ENCODE measurements at regions of chr15 and their contacts with region 1.

Region 1: GRCh38 chr15:73633111-73633990 is at the start of gene NPTN:
- DNase-seq: peak; percentile 92
- ATAC-seq: peak; percentile 91
- H3K4me3 ChIP-seq: peak within 1 kb of the TSS; percentile 74 to 97 (median 93)
- H3K27ac ChIP-seq: peak within 1 kb of the TSS; percentile 91
- H3K4me1 ChIP-seq: peaks cover 72% of the 10 kb centered on the region
- H3K27me3 ChIP-seq: no peaks in the 10 kb centered on the region; a peak in 1 of 5 replicates
- CTCF ChIP-seq: peak; percentile 40; the same call in 1 of the 2 replicates
- EP300 ChIP-seq: no peak
- POLR2A ChIP-seq: peak; percentile 88 to 98
- RAD21 ChIP-seq: no peak
- total RNA-seq, gene NPTN: 57.7 and 110 TPM in 2 replicates

Region 2: GRCh38 chr15:73305331-73306211 is 327.8 kb before region 1 on chr15:
- CTCF ChIA-PET with region 1: interaction called, 15 read pairs
- POLR2A ChIA-PET with region 1: no interaction called
- in situ Hi-C with region 1: no loop called
- intact Hi-C with region 1: no loop called
- DNase-seq: peak; percentile 57
- ATAC-seq: peak; percentile 92
- H3K4me3 ChIP-seq: no peak overlapping the region
- H3K27ac ChIP-seq: no peak overlapping the region
- H3K4me1 ChIP-seq: no peaks in the 10 kb centered on the region
- H3K27me3 ChIP-seq: no peaks in the 10 kb centered on the region
- CTCF ChIP-seq: peak; percentile 81
- EP300 ChIP-seq: no peak
- POLR2A ChIP-seq: no peak
- RAD21 ChIP-seq: peak; percentile 62; the same call in 1 of the 2 replicates

Region 3: GRCh38 chr15:73426323-73426994 is 206.9 kb before region 1 on chr15:
- CTCF ChIA-PET with region 1: no interaction called
- POLR2A ChIA-PET with region 1: no interaction called
- in situ Hi-C with region 1: no loop called
- intact Hi-C with region 1: no loop called
- DNase-seq: no peak
- ATAC-seq: no peak
- H3K4me3 ChIP-seq: no peak overlapping the region
- H3K27ac ChIP-seq: no peak overlapping the region
- H3K4me1 ChIP-seq: no peaks in the 10 kb centered on the region
- H3K27me3 ChIP-seq: no peaks in the 10 kb centered on the region; a peak in 1 of 5 replicates
- CTCF ChIP-seq: no peak
- EP300 ChIP-seq: no peak
- POLR2A ChIP-seq: no peak
- RAD21 ChIP-seq: no peak

Region 4: DNA sequence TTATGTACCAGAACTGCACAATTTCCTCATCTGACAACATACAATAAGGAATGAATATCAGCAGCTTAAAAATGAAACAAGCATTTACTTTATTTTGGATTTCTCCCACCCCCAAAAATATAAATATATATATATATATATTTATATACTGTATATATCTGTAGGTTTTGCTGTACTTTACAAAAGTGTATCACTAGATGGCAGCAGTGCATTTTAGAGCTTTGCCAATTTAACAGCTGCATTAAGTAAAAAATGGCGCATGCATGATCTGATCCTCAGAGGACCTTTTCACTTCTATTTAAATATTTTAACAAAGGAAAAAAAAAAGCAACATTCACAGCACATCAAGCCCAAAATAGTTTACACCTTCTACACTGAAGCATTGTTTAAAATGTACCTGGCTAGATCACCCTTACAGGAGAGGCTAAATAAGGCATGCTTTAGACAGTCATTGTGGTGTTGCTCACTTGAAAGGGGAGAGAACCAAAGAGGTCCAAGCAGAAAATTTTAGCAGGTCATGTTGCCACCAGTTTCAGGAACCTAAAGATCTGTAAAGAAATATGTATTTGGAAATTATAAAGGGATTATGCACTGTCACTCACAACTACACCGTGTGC is 72.7 kb before region 1 on chr15:
- CTCF ChIA-PET with region 1: interaction called, 25 read pairs
- POLR2A ChIA-PET with region 1: interaction called, 8 read pairs
- in situ Hi-C with region 1: loop called (anchors 5 kb)
- intact Hi-C with region 1: loop called (anchors 1 kb)
- DNase-seq: peak; percentile 61
- ATAC-seq: peak; percentile 44; the same call in 2 of the 3 replicates
- H3K4me3 ChIP-seq: no peak overlapping the region
- H3K27ac ChIP-seq: no peak overlapping the region
- H3K4me1 ChIP-seq: no peaks in the 10 kb centered on the region
- H3K27me3 ChIP-seq: no peaks in the 10 kb centered on the region
- CTCF ChIP-seq: peak; percentile 43
- EP300 ChIP-seq: no peak
- POLR2A ChIP-seq: no peak
- RAD21 ChIP-seq: no peak

Region 5: DNA sequence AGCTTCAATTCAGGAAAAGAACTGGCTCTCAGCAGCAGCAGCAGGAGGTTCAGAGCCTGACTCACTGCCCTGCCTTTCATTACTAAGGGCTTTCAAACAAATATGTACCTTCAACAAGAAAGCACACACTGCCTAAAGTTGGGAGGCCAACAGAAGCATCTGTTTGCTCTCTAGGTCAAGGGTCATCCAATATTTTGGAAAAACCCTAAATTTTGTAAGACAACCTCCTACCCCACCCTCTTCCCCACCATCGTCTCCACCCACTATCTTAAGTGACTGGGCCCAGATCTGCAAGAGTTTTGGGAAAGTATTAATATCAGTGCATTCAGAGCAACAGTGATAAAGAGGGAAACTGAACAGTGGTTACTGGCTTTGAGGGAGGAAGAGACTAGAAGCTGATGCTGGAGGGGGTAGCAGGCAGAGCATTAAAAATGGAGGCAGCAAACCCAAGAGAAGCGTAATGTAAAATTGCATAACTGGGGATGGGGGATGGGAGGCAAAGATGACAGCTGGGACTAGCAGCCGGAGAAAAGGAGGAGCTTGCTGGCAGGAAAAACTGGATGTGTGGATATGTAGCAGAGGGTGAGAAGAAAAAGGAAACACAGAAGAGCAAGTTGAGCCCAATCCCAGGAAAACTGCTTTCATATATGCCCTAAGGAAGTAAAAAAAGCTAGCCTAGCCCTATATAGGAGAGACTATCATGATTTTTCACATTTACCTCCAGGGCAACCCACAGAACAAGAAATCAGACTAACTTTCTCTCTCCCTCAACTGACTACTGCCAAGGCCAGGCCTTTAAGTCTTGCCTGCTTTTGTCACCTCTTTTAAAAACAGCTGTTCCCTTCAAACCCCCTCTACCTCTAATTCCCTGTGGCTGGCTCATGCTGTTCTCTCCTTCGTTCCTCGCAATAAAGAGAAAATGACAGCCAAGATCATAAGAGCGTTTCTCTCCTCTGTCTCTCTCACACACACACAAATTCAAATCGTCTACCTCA is 31.6 kb before region 1 on chr15:
- CTCF ChIA-PET with region 1: no interaction called
- POLR2A ChIA-PET with region 1: interaction called, 16 read pairs
- in situ Hi-C with region 1: no loop called
- intact Hi-C with region 1: no loop called
- DNase-seq: peak; percentile 33
- ATAC-seq: peak; percentile 91
- H3K4me3 ChIP-seq: 0 out of 6 replicates have a peak overlapping the region, but pooled peaks of 1 of the 3 experiments have one; percentile 5
- H3K27ac ChIP-seq: peak overlapping the region; percentile 21
- H3K4me1 ChIP-seq: peaks cover 54% of the 10 kb centered on the region
- H3K27me3 ChIP-seq: no peaks in the 10 kb centered on the region
- CTCF ChIP-seq: no peak
- EP300 ChIP-seq: no peak
- POLR2A ChIP-seq: no peak
- RAD21 ChIP-seq: no peak

Region 6: DNA sequence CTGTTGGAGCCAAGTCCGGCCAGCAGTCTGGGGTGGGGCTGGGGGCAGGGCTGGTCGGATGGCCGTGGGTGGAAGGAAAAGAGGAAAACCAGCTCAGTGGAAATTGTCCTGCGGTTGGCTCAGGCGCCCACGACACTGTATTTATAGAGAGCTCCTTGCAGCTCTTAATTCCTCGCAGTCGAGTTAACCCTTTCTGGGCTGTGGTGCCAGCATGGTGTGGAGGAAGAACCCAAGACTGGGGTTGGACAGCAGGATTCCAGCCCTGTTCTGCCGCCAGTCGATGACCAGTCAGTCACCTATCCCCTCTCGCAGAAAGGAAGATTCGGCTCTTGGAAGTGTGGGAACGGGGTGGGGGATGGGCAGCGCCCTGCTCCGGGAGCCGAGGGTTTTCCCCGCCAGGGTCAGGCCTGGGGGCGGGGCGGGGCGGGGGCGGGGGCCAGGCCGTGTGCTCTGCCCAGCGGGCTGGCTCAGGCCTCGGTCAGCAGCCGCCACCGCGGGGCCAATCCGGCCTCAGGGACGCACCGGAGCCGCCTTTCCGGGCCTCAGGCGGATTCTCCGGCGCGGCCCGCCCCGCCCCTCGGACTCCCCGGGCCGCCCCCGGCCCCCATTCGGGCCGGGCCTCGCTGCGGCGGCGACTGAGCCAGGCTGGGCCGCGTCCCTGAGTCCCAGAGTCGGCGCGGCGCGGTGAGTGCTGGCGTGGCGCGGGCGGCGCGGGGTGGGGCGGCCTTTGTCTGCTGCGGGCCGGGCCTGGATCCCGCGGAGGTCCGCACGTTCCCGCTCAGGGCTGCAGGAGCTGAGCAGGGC is 50.6 kb after region 1 on chr15 and contains the start of gene CD276:
- CTCF ChIA-PET with region 1: no interaction called
- POLR2A ChIA-PET with region 1: interaction called, 15 read pairs
- in situ Hi-C with region 1: no loop called
- intact Hi-C with region 1: loop called (anchors 5 kb)
- DNase-seq: peak; percentile 61
- ATAC-seq: peak; percentile 88
- H3K4me3 ChIP-seq: peak within 1 kb of the TSS; percentile 92 to 97 (median 94)
- H3K27ac ChIP-seq: peak within 1 kb of the TSS; percentile 84
- H3K4me1 ChIP-seq: peaks cover 57% of the 10 kb centered on the region
- H3K27me3 ChIP-seq: peaks cover 2 to 12% of the 10 kb centered on the region in 2 experiments; a peak in 2 of 5 replicates
- CTCF ChIP-seq: no peak; the same call in 1 of the 2 replicates
- EP300 ChIP-seq: no peak
- POLR2A ChIP-seq: peak; percentile 35 to 69; a peak in 2 of 4 replicates
- RAD21 ChIP-seq: no peak; the same call in 1 of the 2 replicates
- total RNA-seq, gene CD276: 32.4 and 55.2 TPM in 2 replicates

Region 7: DNA sequence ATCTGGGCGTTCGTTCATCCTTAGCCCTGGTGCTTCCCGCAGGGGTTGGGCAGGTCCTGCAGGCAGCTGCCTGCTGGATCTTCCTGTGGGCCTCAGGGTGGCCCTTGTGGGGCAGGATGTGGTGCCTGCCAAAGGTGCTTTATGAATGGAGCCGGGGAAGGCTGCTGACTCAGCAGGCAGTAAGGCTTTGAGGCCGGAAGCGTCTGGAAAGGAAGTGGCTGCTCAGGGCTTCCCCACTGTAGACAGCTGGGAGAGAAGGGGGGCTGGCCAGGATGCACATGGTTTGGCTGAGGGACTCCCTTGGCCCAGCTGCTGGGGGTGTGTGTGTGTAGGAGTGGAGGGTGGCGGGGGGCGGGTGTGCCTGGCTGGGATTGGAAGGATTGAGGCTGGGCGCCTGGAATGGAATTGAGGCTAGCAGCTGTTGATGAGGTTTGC is 63.7 kb after region 1 on chr15:
- CTCF ChIA-PET with region 1: interaction called, 18 read pairs
- POLR2A ChIA-PET with region 1: no interaction called
- in situ Hi-C with region 1: no loop called
- intact Hi-C with region 1: loop called (anchors 5 kb)
- DNase-seq: no peak
- ATAC-seq: no peak
- H3K4me3 ChIP-seq: no peak overlapping the region
- H3K27ac ChIP-seq: no peak overlapping the region
- H3K4me1 ChIP-seq: peaks cover 22% of the 10 kb centered on the region
- H3K27me3 ChIP-seq: no peaks in the 10 kb centered on the region
- CTCF ChIP-seq: no peak
- EP300 ChIP-seq: no peak
- POLR2A ChIP-seq: no peak
- RAD21 ChIP-seq: no peak

Region 8: GRCh38 chr15:73838831-73839426 is 205.6 kb after region 1 on chr15:
- CTCF ChIA-PET with region 1: no interaction called
- POLR2A ChIA-PET with region 1: no interaction called
- in situ Hi-C with region 1: no loop called
- intact Hi-C with region 1: no loop called
- DNase-seq: no peak
- ATAC-seq: no peak
- H3K4me3 ChIP-seq: no peak overlapping the region
- H3K27ac ChIP-seq: no peak overlapping the region
- H3K4me1 ChIP-seq: no peaks in the 10 kb centered on the region
- H3K27me3 ChIP-seq: peaks cover 0 to 33% of the 10 kb centered on the region in 2 experiments; a peak in 3 of 5 replicates
- CTCF ChIP-seq: no peak
- EP300 ChIP-seq: no peak
- POLR2A ChIP-seq: no peak
- RAD21 ChIP-seq: no peak